ENCODE measurements at regions of chr12 and their contacts with region 1.

Region 1: GRCh38 chr12:4044736-4045730 is 171.8 kb upstream of the PARP11 start:
- DNase-seq: no peak
- H3K4me3 ChIP-seq: no peak overlapping the region
- H3K27ac ChIP-seq: no peak overlapping the region
- H3K4me1 ChIP-seq: no peaks in the 10 kb centered on the region
- H3K27me3 ChIP-seq: no peaks in the 10 kb centered on the region
- CTCF ChIP-seq: no peak
- EP300 ChIP-seq: no peak
- POLR2A ChIP-seq: no peak

Region 2: DNA sequence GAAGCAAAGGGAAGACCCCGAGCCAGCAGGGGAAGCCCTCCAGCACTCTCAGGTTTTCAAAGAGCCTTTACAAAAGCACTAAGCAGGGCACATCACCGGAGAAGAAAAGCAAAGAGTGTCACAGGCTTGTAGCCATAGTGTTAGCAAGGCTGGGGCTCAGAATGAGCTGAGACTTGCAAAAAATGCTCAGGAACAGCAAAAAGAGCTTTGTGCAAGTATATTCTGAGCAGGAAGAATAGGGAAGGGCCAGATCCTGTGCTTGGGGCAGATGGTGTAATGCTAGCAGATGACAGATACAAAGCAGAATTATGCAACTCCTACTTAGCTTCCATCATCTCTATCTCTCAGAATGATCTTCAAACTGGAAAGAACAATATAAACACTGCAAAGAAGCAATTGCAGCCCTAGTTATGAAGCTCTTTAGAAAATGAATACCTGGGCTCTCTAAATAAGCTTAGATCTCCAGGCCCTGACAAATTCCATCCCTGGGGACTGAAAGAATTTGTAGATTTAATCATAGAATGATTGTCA is 148.2 kb before region 1 on chr12:
- intact Hi-C with region 1: loop called in 1 of 4 experiments (anchors 10 kb)
- DNase-seq: no peak
- H3K4me3 ChIP-seq: no peak overlapping the region
- H3K27ac ChIP-seq: no peak overlapping the region
- H3K4me1 ChIP-seq: no peaks in the 10 kb centered on the region
- H3K27me3 ChIP-seq: no peaks in the 10 kb centered on the region
- CTCF ChIP-seq: no peak
- EP300 ChIP-seq: no peak
- POLR2A ChIP-seq: no peak

Region 3: GRCh38 chr12:4287325-4288211 is 242.5 kb after region 1 on chr12:
- intact Hi-C with region 1: no loop called
- DNase-seq: no peak
- H3K4me3 ChIP-seq: no peak overlapping the region
- H3K27ac ChIP-seq: no peak overlapping the region
- H3K4me1 ChIP-seq: no peaks in the 10 kb centered on the region
- H3K27me3 ChIP-seq: no peaks in the 10 kb centered on the region
- CTCF ChIP-seq: no peak
- EP300 ChIP-seq: no peak
- POLR2A ChIP-seq: no peak

Measured in ovary (tissue), 10 donors.